WTC11 (cell line): ENCODE measurements at regions of chr11 and their contacts with region 1.

Region 1: GRCh38 chr11:18650859-18651557 is 16.9 kb upstream of the SPTY2D1 start:
- DNase-seq: peak; percentile 66
- ATAC-seq: peak; percentile 99
- H3K4me3 Mint-ChIP-seq: peak overlapping the region; percentile 40
- H3K27ac Mint-ChIP-seq: no peak overlapping the region
- H3K4me1 Mint-ChIP-seq: no peaks in the 10 kb centered on the region; the same call in 1 of the 2 replicates
- H3K27me3 Mint-ChIP-seq: peaks cover 10% of the 10 kb centered on the region; the same call in 1 of the 2 replicates
- CTCF ChIP-seq: peak; percentile 86

Region 2: DNA sequence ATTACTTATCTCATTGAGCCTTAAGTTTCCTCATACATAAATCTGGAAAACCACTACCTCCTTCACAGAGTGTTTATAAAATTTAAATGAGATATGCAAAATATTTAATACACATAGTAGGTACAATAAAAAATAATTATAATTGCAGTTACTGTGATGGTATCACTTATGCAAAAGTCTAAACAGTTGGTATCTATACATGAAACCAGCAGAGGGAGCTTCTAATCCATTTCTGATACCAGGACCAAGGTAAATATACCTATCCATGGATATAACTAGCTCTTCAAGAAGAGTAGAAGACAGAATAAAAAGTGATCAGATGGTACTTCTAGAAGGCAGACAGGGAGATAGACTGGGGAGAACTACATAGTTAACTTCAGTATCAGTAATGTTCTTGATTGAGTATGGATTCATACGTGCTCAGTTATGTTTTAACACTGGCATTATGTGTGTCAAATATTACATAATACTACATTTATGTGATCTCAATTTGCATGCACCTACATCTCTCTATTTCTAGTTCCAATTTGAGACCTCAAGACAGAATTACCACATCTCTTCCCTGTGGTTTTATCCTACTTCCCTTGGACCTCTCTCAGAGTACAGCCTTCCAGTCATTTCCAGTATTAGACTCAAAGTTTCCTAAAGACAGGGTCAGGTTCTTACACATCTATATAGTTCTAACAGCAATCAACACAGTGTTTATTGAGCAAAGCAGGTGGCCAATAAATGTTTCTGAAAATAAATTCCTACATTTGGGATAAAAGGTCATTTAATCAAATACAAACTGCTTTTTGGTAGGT is 110.6 kb before region 1 on chr11:
- CTCF ChIA-PET with region 1: interaction called, 16 read pairs
- POLR2A ChIA-PET with region 1: no interaction called
- DNase-seq: no peak
- ATAC-seq: peak; percentile 53; the same call in 1 of the 2 replicates
- H3K4me3 Mint-ChIP-seq: no peak overlapping the region
- H3K27ac Mint-ChIP-seq: no peak overlapping the region
- H3K4me1 Mint-ChIP-seq: no peaks in the 10 kb centered on the region
- H3K27me3 Mint-ChIP-seq: no peaks in the 10 kb centered on the region
- CTCF ChIP-seq: no peak

Region 3: DNA sequence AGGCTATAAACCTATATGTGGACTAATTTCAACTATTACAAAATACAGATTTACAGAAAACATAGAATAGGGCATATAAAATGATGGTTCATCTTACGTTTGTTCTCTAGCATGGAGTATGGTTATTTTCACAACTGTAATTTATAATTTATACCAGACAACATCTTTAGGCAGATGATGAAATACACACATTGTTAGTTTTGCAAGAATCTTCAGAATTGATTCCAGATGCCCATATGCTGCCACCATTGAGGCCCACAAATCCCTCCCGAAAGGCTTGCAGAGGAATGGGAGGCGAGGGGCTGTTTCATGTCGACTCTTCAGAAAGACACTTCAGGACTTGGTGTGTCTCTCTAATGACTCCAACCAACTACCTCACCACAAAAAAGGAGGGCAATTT is 134.4 kb after region 1 on chr11:
- CTCF ChIA-PET with region 1: no interaction called
- POLR2A ChIA-PET with region 1: no interaction called
- DNase-seq: no peak
- ATAC-seq: no peak
- H3K4me3 Mint-ChIP-seq: no peak overlapping the region
- H3K27ac Mint-ChIP-seq: no peak overlapping the region
- H3K4me1 Mint-ChIP-seq: peaks cover 6% of the 10 kb centered on the region
- H3K27me3 Mint-ChIP-seq: peaks cover 29% of the 10 kb centered on the region
- CTCF ChIP-seq: no peak